Panc1 (cell line): ENCODE measurements at regions of chr12 and their contacts with region 1.

Region 1: GRCh38 chr12:108821407-108822397 is 35.7 kb downstream of the SSH1 start:
- DNase-seq: no peak
- ATAC-seq: no peak
- H3K4me3 ChIP-seq: no peak overlapping the region
- H3K27ac ChIP-seq: no peak overlapping the region; the same call in 1 of the 2 replicates
- H3K4me1 ChIP-seq: peaks cover 37% of the 10 kb centered on the region
- H3K27me3 ChIP-seq: no peaks in the 10 kb centered on the region
- CTCF ChIP-seq: no peak

Region 2: DNA sequence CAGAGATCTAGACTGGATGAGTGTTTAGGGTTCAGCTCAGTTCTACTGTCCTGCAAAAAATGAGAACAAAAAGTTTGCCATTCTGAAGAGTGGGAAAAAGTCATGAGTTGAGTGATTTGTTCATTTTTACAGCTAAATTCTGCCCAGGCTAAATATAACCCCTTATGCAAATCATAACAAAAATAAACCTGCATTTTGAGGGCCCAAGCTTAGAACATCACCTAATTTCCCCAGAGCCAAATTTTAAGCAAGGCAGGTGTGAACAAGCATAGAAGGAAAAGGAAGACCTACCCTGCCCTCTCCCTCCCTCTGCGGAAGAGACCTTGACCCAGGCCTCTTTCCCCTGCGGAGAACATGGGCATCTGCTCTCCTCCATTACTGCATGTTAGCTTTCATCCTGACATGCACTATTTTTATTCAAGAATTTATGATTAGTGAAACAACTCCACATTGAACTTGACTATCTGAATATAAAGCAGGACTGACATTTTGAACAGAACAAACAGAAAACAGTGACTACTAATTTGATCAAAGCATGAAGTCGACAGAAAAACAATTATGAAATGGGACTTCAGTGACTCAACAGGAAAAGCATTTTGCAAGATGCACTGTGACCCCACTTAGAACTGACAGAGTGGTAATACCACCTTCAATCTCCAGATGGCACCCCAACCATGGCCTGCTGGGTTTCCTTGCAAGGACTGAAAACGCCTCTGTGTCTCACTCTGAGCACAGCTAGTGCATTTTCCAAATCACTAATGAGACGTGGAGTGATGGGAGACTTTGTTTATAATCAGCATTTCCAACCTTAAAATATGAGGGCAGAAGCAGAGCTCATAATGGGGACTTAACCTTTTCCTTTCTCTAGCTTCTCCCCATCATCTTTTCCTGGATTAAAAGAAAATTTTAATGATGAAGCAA is 157.1 kb before region 1 on chr12:
- CTCF ChIA-PET with region 1: no interaction called
- POLR2A ChIA-PET with region 1: interaction called, 15 read pairs
- in situ Hi-C with region 1: no loop called
- intact Hi-C with region 1: no loop called
- DNase-seq: peak; percentile 89
- ATAC-seq: peak; percentile 95
- H3K4me3 ChIP-seq: no peak overlapping the region
- H3K27ac ChIP-seq: peak overlapping the region; percentile 75
- H3K4me1 ChIP-seq: peaks cover 17% of the 10 kb centered on the region
- H3K27me3 ChIP-seq: no peaks in the 10 kb centered on the region
- CTCF ChIP-seq: peak; percentile 95

Region 3: DNA sequence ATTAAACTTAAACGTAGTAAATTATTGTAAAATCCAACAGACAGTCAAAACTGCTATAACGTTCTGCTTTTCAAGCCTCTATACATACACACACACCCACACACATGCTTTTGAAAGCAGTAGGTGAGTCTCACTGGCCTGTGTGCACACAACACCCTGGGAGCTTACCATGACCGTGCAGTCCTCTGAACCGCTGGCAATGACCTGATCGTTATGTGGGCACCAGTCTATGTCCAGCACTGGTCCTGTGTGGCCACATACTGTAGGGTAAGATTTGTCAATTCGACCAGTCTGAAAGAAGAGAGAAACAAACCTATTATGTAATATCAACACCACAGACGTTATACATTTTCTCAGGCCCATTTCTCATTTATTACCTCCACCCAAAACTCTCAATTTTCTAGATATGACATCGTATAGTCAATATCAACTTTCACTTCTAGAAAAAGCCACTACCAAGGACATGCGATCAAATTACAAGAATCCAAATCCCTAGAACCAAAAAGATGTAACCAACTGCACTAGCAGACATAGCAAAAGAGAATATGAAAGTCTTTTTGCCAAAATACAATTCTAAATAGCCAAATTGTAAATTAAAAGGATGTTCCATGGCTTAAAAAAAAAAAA is 143.5 kb before region 1 on chr12:
- CTCF ChIA-PET with region 1: no interaction called
- POLR2A ChIA-PET with region 1: no interaction called
- in situ Hi-C with region 1: no loop called
- intact Hi-C with region 1: no loop called
- DNase-seq: no peak
- ATAC-seq: no peak
- H3K4me3 ChIP-seq: no peak overlapping the region
- H3K27ac ChIP-seq: no peak overlapping the region
- H3K4me1 ChIP-seq: no peaks in the 10 kb centered on the region
- H3K27me3 ChIP-seq: no peaks in the 10 kb centered on the region
- CTCF ChIP-seq: no peak

Region 4: DNA sequence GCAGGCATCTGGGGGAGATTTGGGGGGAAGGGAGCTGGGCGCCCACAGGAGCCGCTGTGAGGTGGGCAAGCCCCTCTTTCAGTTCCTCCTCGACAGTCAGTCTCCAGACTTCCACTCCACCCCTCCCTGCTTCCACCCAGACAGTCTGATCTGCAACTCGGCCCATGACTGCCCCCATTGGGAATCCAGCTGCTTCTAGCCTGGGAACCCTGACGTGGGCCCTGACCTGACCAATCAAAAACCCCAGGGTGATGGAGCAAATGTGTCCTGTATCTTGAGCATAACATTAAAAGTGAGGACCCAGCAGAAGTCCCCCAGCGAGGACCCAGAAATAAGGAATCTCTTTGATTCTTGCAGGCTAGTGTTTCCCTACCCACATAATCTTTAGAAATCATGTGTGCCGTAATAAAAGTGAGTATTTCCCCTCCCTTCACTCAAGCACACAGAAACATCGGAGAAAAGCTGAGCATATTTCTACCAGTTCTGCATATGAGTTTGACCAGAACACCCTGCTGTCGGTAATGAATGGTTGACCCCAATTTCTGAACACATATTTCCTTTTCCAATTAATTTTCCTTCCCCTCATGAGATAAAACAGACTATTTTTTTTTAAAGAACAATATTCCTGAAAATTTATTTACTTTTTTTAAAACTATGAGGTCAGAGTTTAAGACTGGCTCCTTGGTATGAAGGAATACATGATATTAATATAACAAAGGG is 29.3 kb after region 1 on chr12:
- CTCF ChIA-PET with region 1: no interaction called
- POLR2A ChIA-PET with region 1: interaction called, 11 read pairs
- in situ Hi-C with region 1: no loop called
- intact Hi-C with region 1: no loop called
- DNase-seq: no peak
- ATAC-seq: peak; percentile 81
- H3K4me3 ChIP-seq: peak overlapping the region in 1 of 2 experiments; percentile 6; a peak in 1 of 4 replicates
- H3K27ac ChIP-seq: peak overlapping the region; percentile 89
- H3K4me1 ChIP-seq: peaks cover 53% of the 10 kb centered on the region
- H3K27me3 ChIP-seq: no peaks in the 10 kb centered on the region
- CTCF ChIP-seq: no peak; the same call in 1 of the 2 replicates

Region 5: GRCh38 chr12:109110988-109111495 is 289.3 kb after region 1 on chr12:
- CTCF ChIA-PET with region 1: no interaction called
- POLR2A ChIA-PET with region 1: no interaction called
- in situ Hi-C with region 1: no loop called
- intact Hi-C with region 1: no loop called
- DNase-seq: no peak
- ATAC-seq: peak; percentile 98
- H3K4me3 ChIP-seq: peak overlapping the region; percentile 53 to 71
- H3K27ac ChIP-seq: peak overlapping the region; percentile 85
- H3K4me1 ChIP-seq: peaks cover 18% of the 10 kb centered on the region
- H3K27me3 ChIP-seq: no peaks in the 10 kb centered on the region
- CTCF ChIP-seq: no peak